ENCODE measurements at regions of chr2 and their contacts with region 1.

Region 1: DNA sequence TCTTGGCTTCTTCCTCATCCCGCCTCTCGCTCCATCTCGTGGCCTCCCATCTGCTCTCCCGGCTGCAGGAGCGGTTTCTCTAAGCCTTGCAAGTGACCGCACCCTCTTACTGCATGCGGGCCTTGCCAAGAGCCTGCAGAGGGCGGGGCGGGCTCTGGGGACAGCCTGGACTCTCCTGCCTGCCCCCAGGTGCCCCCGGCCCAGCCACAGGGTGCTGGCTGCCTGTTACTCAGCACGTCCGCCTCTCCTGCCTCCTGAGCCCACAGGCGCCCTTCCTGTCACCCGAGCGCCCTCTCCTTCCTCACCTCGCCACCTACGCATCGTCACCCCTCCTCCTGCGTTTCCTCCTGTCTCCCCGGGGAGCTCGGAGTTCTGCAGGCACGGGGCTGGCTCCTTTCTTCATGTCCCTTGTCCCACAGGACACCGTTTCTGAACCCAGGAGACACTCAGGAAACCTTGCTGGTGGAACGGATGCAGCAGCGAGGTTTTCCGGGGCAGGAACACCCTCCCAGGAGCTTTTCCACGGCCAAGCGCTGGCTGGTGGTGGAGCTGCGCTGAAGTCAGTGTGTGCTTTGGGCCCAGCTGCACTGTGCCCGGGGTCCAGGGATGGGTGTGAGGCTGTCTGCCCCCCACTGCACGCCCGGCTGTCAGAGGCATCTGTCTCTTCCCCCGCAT is 28.5 kb downstream of the HPCAL1 start:
- DNase-seq: peak; percentile 41 to 79 (median 70)
- ATAC-seq: peak; percentile 58
- H3K4me3 ChIP-seq: peak overlapping the region; percentile 80
- H3K4me3 Mint-ChIP-seq: peak overlapping the region; percentile 85 to 97 (median 94)
- H3K27ac ChIP-seq: peak overlapping the region; percentile 82
- H3K27ac Mint-ChIP-seq: peak overlapping the region; percentile 92 to 99 (median 98)
- H3K4me1 ChIP-seq: peaks cover 32 to 65% of the 10 kb centered on the region in 2 donors
- H3K4me1 Mint-ChIP-seq: peaks cover 58 to 96% (median 93%) of the 10 kb centered on the region in 7 donors
- H3K27me3 ChIP-seq: no peaks in the 10 kb centered on the region
- H3K27me3 Mint-ChIP-seq: no peaks in the 10 kb centered on the region

Region 2: DNA sequence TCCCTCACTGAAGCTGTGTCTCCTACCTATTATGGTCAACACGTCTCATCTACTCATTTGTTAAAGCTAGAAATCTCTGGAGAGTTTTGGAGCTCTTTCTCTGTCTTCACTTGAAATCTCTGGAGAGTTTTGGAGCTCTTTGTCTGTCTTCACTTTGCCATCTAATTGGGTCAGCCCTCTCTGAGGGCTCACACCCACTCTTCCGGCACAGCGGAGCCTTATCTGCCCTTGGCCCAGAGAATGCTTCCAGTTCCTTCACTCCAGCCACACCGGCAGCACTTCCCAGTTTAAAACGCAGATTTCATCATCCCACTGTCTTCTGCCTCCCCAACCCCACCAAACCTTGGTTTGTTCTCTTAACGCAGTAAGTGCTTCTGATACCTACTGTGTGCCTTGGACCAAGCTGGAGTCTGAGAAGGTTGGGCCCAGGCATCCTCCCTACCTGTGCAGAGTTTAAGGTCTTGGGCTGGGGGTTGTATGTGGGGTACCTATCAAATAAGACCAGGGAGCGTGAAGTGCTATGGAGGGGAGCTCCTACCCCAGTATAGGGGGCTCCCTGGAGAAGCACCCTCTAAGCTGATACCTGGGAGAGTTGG is 23.5 kb before region 1 on chr2:
- CTCF ChIA-PET with region 1: interaction called, 93 read pairs
- POLR2A ChIA-PET with region 1: interaction called, 150 read pairs
- intact Hi-C with region 1: loop called (anchors 1 kb)
- DNase-seq: no peak
- ATAC-seq: no peak
- H3K4me3 ChIP-seq: no peak overlapping the region
- H3K4me3 Mint-ChIP-seq: peak overlapping the region in 9 of 10 donors; percentile 66 to 100 (median 97)
- H3K27ac ChIP-seq: peak overlapping the region; percentile 10
- H3K27ac Mint-ChIP-seq: peak overlapping the region in 8 of 9 donors; percentile 51 to 92 (median 80)
- H3K4me1 ChIP-seq: peaks cover 27 to 32% of the 10 kb centered on the region in 2 donors
- H3K4me1 Mint-ChIP-seq: peaks cover 41 to 68% (median 49%) of the 10 kb centered on the region in 7 donors
- H3K27me3 ChIP-seq: no peaks in the 10 kb centered on the region
- H3K27me3 Mint-ChIP-seq: no peaks in the 10 kb centered on the region

Region 3: GRCh38 chr2:10317646-10318045 is 13.5 kb before region 1 on chr2:
- CTCF ChIA-PET with region 1: interaction called, 4 read pairs
- POLR2A ChIA-PET with region 1: interaction called, 20 read pairs
- intact Hi-C with region 1: no loop called
- DNase-seq: no peak
- ATAC-seq: no peak
- H3K4me3 ChIP-seq: no peak overlapping the region
- H3K4me3 Mint-ChIP-seq: peak overlapping the region in 1 of 10 donors; percentile 16
- H3K27ac ChIP-seq: no peak overlapping the region
- H3K27ac Mint-ChIP-seq: peak overlapping the region in 7 of 9 donors; percentile 19 to 81 (median 60)
- H3K4me1 ChIP-seq: peaks cover 0 to 15% of the 10 kb centered on the region in 2 donors
- H3K4me1 Mint-ChIP-seq: peaks cover 13 to 81% (median 58%) of the 10 kb centered on the region in 7 donors
- H3K27me3 ChIP-seq: no peaks in the 10 kb centered on the region
- H3K27me3 Mint-ChIP-seq: no peaks in the 10 kb centered on the region

Region 4: GRCh38 chr2:10382354-10383061 is 51.3 kb after region 1 on chr2:
- CTCF ChIA-PET with region 1: interaction called, 5 read pairs
- POLR2A ChIA-PET with region 1: interaction called, 50 read pairs
- intact Hi-C with region 1: loop called in 1 of 2 experiments (anchors 1 kb)
- DNase-seq: peak in 7 of 9 donors; percentile 59 to 81 (median 73)
- ATAC-seq: peak; percentile 91
- H3K4me3 ChIP-seq: peak overlapping the region; percentile 57
- H3K4me3 Mint-ChIP-seq: peak overlapping the region; percentile 46 to 86 (median 81)
- H3K27ac ChIP-seq: peak overlapping the region; percentile 64
- H3K27ac Mint-ChIP-seq: peak overlapping the region in 8 of 9 donors; percentile 66 to 96 (median 91)
- H3K4me1 ChIP-seq: peaks cover 57 to 90% of the 10 kb centered on the region in 2 donors
- H3K4me1 Mint-ChIP-seq: peaks cover 70 to 96% (median 93%) of the 10 kb centered on the region in 7 donors
- H3K27me3 ChIP-seq: no peaks in the 10 kb centered on the region
- H3K27me3 Mint-ChIP-seq: no peaks in the 10 kb centered on the region

Region 5: DNA sequence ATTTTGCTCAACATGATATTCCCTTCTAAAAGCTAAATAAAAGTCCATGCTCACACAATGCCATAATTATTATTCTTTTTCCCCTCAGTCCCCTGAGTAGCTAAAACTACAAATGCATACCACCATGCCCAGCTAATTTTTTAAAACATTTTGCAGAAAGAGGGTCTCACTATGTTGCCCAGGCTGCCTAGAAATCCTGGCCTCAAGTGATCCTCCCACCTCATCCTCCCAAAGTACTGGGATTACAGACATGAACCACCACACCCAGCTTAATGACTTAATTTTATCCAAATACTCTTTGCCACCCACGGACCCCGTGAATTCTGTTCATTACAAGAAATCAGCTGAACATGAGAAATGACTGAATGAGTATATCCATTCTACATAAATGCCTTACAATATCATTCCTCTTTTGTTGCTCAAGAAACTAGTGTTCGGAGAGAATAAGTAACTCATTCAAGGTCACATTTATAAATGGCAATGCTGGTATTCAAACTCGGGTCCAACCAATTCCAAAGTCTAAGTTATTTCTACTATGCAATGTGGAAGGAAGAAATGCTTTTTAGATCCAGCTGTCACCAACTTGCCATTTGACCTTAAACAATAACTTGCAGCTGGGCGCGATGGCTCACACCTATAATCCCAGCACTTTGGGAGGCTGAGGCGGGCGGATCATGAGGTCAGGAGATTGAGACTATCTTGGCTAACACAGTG is 298.8 kb after region 1 on chr2:
- CTCF ChIA-PET with region 1: no interaction called
- POLR2A ChIA-PET with region 1: no interaction called
- intact Hi-C with region 1: no loop called
- DNase-seq: no peak
- ATAC-seq: no peak
- H3K4me3 ChIP-seq: no peak overlapping the region
- H3K4me3 Mint-ChIP-seq: no peak overlapping the region
- H3K27ac ChIP-seq: no peak overlapping the region
- H3K27ac Mint-ChIP-seq: peak overlapping the region in 1 of 9 donors; percentile 43
- H3K4me1 ChIP-seq: no peaks in the 10 kb centered on the region
- H3K4me1 Mint-ChIP-seq: peaks cover 0 to 11% (median 1%) of the 10 kb centered on the region in 7 donors
- H3K27me3 ChIP-seq: no peaks in the 10 kb centered on the region
- H3K27me3 Mint-ChIP-seq: no peaks in the 10 kb centered on the region